GM18951 (cell line): ENCODE measurements at regions of chr7 and their contacts with region 1.

Region 1: GRCh38 chr7:30564243-30564892 is 30.3 kb upstream of the GARS1 start:
- POLR2A ChIP-seq: no peak

Region 2: DNA sequence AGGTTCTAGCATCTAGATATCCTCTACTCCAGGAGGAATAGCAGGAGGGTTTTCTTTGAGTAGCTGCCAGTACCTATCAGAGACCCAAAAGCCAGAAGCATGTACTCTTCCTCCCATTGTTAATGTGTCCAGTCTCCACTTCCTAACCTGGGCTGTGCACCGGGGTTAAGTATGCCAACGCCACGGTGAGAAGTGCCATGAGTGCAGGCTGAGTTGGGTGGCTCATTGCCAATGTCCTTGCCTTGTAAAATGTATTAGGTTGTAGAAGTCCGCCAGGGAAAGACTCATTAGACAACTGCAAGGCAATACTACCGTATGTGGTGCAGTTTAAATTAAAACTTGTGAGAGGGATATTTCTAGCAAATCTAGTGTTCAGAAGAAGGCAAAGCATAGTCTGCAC is 1055.8 kb before region 1 on chr7:
- in situ Hi-C with region 1: no loop called
- POLR2A ChIP-seq: no peak

Region 3: GRCh38 chr7:30252885-30253795 is 311.2 kb before region 1 on chr7:
- in situ Hi-C with region 1: loop called (anchors 25 kb)
- POLR2A ChIP-seq: no peak